Heart right ventricle (tissue), 16 donors: ENCODE measurements at regions of chr15 and their contacts with region 1.

Region 1: DNA sequence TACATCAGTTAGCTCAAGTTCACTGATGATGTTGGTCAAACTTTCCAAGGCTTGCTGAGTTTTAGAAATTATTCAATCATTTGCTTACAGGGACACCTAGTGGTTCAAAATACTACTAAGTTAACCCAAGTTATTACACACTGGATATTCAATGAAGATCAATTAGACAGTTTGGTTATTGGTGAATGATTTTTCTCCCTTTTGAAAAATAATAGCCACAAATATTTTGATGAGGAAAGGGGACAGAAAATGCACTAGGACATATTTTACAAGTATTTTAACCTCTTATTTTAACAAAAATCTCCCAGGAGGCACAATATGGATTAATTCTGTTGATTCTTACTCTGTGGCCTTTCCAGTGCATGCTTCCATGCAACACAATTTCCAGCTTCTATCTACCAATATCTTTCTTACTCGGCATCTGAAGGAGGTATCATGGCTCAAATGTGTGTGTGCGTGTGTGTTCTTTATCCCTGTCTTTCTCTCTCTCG is 20.1 kb upstream of the GOLGA6L2 start:
- DNase-seq: no peak
- ATAC-seq: peak in 4 of 8 donors; percentile 35 to 54 (median 46)
- H3K4me3 ChIP-seq: no peak overlapping the region
- H3K27ac ChIP-seq: no peak overlapping the region
- H3K4me1 ChIP-seq: no peaks in the 10 kb centered on the region
- H3K27me3 ChIP-seq: peaks cover 0 to 3% (median 0%) of the 10 kb centered on the region in 7 donors
- CTCF ChIP-seq: peak in 7 of 9 donors; percentile 41 to 60 (median 53)

Region 2: DNA sequence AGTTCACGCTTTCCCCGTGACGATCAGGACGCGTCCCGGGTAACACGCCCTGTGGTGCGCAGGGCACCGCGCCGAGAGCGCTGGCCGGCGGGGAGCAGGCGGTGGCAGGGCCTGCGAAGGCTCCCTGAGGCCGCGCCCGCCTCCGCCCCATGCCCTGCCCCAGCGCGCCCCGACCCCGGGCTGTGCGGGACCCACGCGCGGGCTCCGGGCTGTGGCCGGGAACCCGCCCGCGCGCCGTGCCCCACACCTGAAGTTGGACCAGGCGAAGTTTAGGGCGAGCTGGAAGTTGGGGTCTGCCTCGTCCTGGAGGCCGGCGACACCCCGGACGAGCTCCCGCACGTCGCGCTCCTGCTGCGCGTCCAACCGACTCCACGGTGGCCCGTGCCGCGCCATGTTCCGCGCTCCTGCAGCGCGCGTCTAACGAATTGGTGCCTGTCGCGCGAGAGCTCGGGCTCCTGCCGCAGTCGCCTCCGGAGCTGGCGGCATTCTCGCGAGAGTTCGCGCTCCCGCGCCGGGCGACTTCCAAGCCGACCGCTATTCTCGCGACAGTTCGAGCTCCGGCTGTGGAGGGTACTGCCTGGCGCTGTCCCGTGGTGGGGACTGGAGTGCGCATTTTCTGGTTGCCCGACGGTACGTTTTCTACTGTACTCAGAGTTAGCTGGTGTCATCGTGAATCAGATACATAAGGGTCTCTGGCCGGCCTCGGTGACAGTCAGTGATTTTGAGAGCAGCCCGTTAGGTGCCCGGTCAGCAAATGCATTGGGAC is 427.8 kb before region 1 on chr15 and contains the start of gene TUBGCP5:
- intact Hi-C with region 1: loop called in 5 of 10 experiments (anchors 5 to 10 kb)
- DNase-seq: peak; percentile 97 to 99
- ATAC-seq: peak; percentile 97 to 100 (median 99)
- H3K4me3 ChIP-seq: peak within 1 kb of the TSS; percentile 55 to 85 (median 74)
- H3K27ac ChIP-seq: peak within 1 kb of the TSS in 9 of 10 donors; percentile 70 to 96 (median 88)
- H3K4me1 ChIP-seq: peaks cover 0 to 19% (median 16%) of the 10 kb centered on the region in 9 donors
- H3K27me3 ChIP-seq: no peaks in the 10 kb centered on the region
- CTCF ChIP-seq: peak in 7 of 9 donors; percentile 11 to 62 (median 56)
- total RNA-seq, gene TUBGCP5: 10.7 to 17.3 (median 13.6) TPM

Region 3: GRCh38 chr15:23447107-23447500 is 20.1 kb before region 1 on chr15 and contains the start of gene GOLGA6L2:
- intact Hi-C with region 1: no loop called
- DNase-seq: no peak
- ATAC-seq: no peak
- H3K4me3 ChIP-seq: no peak within 1 kb of the TSS
- H3K27ac ChIP-seq: no peak within 1 kb of the TSS
- H3K4me1 ChIP-seq: no peaks in the 10 kb centered on the region
- H3K27me3 ChIP-seq: no peaks in the 10 kb centered on the region
- CTCF ChIP-seq: no peak
- total RNA-seq, gene GOLGA6L2: 0.09 TPM in 1 of 10 donors, not detected in the others